Calu3 (cell line): ENCODE measurements at regions of chr14 and their contacts with region 1.

Region 1: GRCh38 chr14:28751467-28752058 is 15.0 kb upstream of the FOXG1 start:
- DNase-seq: peak; percentile 65
- H3K4me3 Mint-ChIP-seq: no peak overlapping the region
- H3K27ac Mint-ChIP-seq: no peak overlapping the region
- H3K4me1 Mint-ChIP-seq: peaks cover 18% of the 10 kb centered on the region
- H3K27me3 Mint-ChIP-seq: peaks cover 23% of the 10 kb centered on the region
- CTCF ChIP-seq: peak; percentile 62

Region 2: GRCh38 chr14:28931999-28932398 is 180.4 kb after region 1 on chr14:
- CTCF ChIA-PET with region 1: no interaction called
- intact Hi-C with region 1: no loop called
- DNase-seq: no peak
- H3K4me3 Mint-ChIP-seq: no peak overlapping the region
- H3K27ac Mint-ChIP-seq: no peak overlapping the region
- H3K4me1 Mint-ChIP-seq: no peaks in the 10 kb centered on the region
- H3K27me3 Mint-ChIP-seq: no peaks in the 10 kb centered on the region
- CTCF ChIP-seq: no peak

Region 3: GRCh38 chr14:29016050-29016900 is 264.7 kb after region 1 on chr14:
- CTCF ChIA-PET with region 1: no interaction called
- intact Hi-C with region 1: loop called (anchors 10 kb)
- DNase-seq: peak; percentile 65
- H3K4me3 Mint-ChIP-seq: no peak overlapping the region
- H3K27ac Mint-ChIP-seq: no peak overlapping the region
- H3K4me1 Mint-ChIP-seq: no peaks in the 10 kb centered on the region
- H3K27me3 Mint-ChIP-seq: no peaks in the 10 kb centered on the region
- CTCF ChIP-seq: peak; percentile 74

Region 4: DNA sequence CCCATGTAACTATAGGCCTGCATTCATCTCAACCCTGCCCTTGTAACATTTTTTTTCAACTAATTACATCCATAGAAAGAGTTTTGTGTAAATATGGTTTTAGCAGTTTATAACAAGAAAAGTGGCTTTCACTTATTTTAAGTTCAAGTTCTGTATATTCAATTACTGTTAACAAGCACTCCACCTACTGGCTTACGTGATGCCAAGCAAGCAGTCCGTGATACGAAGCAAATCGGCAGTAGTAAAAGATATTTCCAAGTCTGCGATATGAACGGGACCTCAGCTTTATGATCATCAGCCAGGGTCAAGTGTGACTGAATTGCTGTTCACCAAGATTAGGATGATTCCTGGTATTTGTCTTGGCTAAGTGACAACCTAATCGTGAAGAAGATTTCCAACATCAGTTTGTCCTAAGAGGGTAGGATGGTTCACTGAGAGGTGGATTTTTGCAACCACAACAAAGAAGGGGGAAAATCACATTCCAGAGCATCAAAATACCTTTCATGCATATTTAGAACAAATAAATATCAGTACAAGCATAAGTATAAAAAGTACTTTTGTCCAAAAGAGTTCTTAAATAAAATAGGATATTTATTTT is 471.2 kb after region 1 on chr14:
- CTCF ChIA-PET with region 1: no interaction called
- intact Hi-C with region 1: loop called (anchors 2 kb)
- DNase-seq: peak; percentile 7
- H3K4me3 Mint-ChIP-seq: no peak overlapping the region
- H3K27ac Mint-ChIP-seq: no peak overlapping the region
- H3K4me1 Mint-ChIP-seq: no peaks in the 10 kb centered on the region
- H3K27me3 Mint-ChIP-seq: peaks cover 12% of the 10 kb centered on the region
- CTCF ChIP-seq: peak; percentile 27

Region 5: GRCh38 chr14:29521526-29522137 is 770.1 kb after region 1 on chr14:
- CTCF ChIA-PET with region 1: no interaction called
- intact Hi-C with region 1: loop called (anchors 1 kb)
- DNase-seq: peak; percentile 41
- H3K4me3 Mint-ChIP-seq: no peak overlapping the region
- H3K27ac Mint-ChIP-seq: no peak overlapping the region
- H3K4me1 Mint-ChIP-seq: no peaks in the 10 kb centered on the region
- H3K27me3 Mint-ChIP-seq: no peaks in the 10 kb centered on the region
- CTCF ChIP-seq: peak; percentile 28

Region 6: GRCh38 chr14:29536886-29537511 is 785.4 kb after region 1 on chr14:
- CTCF ChIA-PET with region 1: interaction called, 3 read pairs
- intact Hi-C with region 1: loop called (anchors 1 kb)
- DNase-seq: peak; percentile 4
- H3K4me3 Mint-ChIP-seq: no peak overlapping the region
- H3K27ac Mint-ChIP-seq: no peak overlapping the region
- H3K4me1 Mint-ChIP-seq: no peaks in the 10 kb centered on the region
- H3K27me3 Mint-ChIP-seq: peaks cover 11% of the 10 kb centered on the region
- CTCF ChIP-seq: peak; percentile 38

Region 7: GRCh38 chr14:30214461-30215090 is 1463.0 kb after region 1 on chr14:
- CTCF ChIA-PET with region 1: interaction called, 4 read pairs
- intact Hi-C with region 1: loop called (anchors 2 kb)
- DNase-seq: peak; percentile 32
- H3K4me3 Mint-ChIP-seq: no peak overlapping the region
- H3K27ac Mint-ChIP-seq: no peak overlapping the region
- H3K4me1 Mint-ChIP-seq: no peaks in the 10 kb centered on the region
- H3K27me3 Mint-ChIP-seq: no peaks in the 10 kb centered on the region
- CTCF ChIP-seq: peak; percentile 63